ENCODE measurements at regions of chr15 and their contacts with region 1.

Region 1: GRCh38 chr15:59543721-59544547 is 67.6 kb upstream of the GCNT3 start:
- DNase-seq: peak; percentile 60
- CTCF ChIP-seq: no peak

Region 2: GRCh38 chr15:59622289-59622688 is 78.4 kb after region 1 on chr15:
- in situ Hi-C with region 1: loop called (anchors 10 kb)
- DNase-seq: peak; percentile 69
- CTCF ChIP-seq: peak; percentile 40